Activated CD4-positive, alpha-beta memory T cell treated with anti-CD3 and anti-CD28 coated beads for 36 hours (primary cell): ENCODE measurements at regions of chr18 and their contacts with region 1.

Region 1: DNA sequence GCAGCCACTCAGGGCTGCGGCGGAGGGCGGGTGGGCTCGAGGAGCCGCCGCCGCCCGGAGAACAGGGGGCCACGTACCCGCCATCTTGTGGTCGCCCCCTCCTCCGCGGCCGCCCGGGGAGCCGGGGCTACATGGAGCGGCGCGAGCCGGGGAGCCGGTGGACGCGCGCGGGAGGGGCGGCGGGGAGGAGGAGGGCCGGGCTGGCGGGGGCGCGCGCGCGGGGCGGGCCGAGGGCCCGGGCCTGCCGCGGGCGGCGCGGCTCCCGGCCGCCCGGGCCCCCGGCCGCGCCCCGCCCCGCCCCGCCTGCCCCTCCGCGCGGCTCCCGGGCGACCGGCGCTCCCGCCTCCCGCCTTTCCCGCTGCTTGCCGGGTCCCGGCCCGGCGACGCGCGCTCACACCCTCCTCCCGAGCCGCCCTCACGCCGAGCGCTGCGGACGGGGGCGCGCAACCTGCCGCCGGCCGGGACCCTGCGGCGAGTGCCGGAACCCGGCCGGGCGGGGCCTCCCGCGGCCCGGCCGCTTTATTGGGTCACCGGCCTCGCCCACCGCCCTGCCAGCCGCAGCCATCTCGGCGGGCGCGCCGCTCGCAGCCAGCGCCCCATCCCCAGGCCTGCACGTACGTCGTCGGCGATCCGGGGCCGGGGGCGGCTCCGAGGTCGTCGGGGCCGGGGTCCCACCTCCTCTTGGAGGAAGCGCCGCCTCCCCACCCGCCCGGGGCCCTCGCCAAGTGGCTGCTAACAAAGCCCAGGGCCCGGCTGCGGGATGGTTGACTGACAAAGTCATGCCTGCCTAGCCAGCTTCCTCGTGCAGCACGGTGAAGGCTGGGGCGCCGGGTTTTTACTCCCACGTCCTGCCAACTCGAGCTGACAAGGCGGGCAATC is at the start of gene PPP4R1:
- DNase-seq: peak; percentile 78
- H3K4me3 Mint-ChIP-seq: peak within 1 kb of the TSS; percentile 95
- H3K27ac Mint-ChIP-seq: peak within 1 kb of the TSS; percentile 91
- H3K4me1 Mint-ChIP-seq: peaks cover 35% of the 10 kb centered on the region
- H3K27me3 Mint-ChIP-seq: no peaks in the 10 kb centered on the region
- total RNA-seq, gene PPP4R1: 39.3 to 44.5 TPM

Region 2: DNA sequence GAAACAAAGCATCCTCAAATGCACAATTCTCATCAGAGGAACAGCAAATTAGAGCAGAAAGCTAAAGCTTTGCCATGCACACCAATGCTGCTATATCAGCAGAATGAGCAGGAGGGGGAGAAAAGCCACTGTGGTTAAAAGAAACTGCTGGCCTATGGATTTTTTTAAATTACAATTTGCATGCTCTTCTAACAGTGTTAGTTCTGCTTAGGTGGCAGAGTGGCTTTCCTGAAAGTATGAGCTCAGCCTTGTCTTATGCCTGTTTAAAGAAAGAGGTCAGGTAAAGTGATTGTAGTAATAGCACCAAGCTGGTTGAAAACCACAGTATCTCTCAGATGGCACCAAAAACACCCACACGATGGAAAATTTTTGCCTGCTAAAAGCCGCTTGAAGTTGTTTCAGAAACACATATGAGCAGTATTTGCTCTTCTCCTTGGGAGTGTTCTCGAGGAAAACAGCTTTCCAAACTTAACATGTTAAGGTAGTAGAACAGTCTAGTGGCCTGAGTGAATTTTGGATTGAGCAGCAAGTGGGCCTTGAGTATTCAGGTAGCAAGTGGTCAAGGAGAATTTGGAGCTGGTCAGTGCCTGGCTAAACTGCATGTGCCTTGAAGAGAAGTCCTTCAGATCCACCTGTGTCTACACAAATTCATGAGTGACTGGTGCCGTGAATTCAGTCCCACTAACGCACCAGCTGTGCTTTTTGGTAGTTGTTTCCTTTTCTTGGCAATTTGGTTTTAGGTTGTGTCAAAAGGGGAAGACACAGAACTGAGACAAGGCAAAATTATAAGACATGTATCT is 531.7 kb before region 1 on chr18:
- CTCF ChIA-PET with region 1: no interaction called
- POLR2A ChIA-PET with region 1: no interaction called
- intact Hi-C with region 1: loop called (anchors 10 kb)
- DNase-seq: peak; percentile 82
- H3K4me3 Mint-ChIP-seq: peak overlapping the region; percentile 70
- H3K27ac Mint-ChIP-seq: peak overlapping the region; percentile 100
- H3K4me1 Mint-ChIP-seq: peaks cover 51% of the 10 kb centered on the region
- H3K27me3 Mint-ChIP-seq: no peaks in the 10 kb centered on the region

Region 3: GRCh38 chr18:9474983-9475642 is 139.5 kb before region 1 on chr18 and contains the start of gene RALBP1:
- CTCF ChIA-PET with region 1: no interaction called
- POLR2A ChIA-PET with region 1: no interaction called
- intact Hi-C with region 1: loop called (anchors 2 kb)
- DNase-seq: peak; percentile 99
- H3K4me3 Mint-ChIP-seq: peak within 1 kb of the TSS; percentile 92
- H3K27ac Mint-ChIP-seq: peak within 1 kb of the TSS; percentile 93
- H3K4me1 Mint-ChIP-seq: peaks cover 28% of the 10 kb centered on the region
- H3K27me3 Mint-ChIP-seq: peaks cover 11% of the 10 kb centered on the region
- total RNA-seq, gene RALBP1: 53.1 to 54.7 TPM

Region 4: DNA sequence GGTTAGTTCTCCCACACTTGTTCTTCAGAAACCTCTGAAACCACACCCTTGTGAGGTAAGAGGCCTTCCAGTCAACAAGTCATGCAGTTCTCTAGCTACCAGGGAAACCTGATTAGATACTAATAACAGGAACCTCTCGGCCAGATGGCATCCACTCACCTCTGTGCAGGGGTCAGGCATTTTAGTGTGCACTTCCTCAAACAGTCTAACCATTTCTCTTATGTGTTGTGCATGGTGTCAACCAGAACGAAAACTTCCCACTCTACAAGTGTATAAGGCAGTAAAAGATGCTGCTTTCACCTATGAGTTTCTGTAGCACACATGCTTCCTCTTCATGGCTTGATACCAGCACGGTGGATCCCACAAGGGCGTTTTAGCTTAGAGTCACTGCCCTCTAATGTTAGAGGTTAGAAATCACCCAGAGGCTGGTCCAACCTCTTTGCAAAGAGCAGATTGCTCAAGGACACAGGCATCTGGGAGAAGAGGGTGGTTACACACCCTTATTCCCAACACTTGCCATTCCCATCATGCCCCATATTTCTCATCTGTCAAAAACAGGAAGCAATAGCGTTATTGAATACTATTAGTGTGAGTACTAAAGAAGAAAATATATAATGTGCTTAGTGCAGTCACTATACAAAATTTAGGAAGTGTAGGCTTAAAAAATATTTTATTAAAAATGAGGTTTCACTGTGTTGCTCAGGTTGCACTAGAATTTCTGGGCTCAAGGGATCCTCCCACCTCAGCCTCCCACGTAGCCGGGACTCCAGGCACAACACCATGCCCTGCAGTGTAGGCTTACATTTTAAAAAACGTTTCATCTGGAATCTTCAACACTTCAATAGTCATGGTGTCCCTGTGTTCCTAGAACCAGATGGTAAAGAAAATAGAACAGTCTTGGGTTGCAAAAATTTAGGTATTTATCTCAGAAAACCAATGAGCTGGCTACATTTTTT is 58.9 kb after region 1 on chr18:
- CTCF ChIA-PET with region 1: interaction called, 12 read pairs
- POLR2A ChIA-PET with region 1: no interaction called
- intact Hi-C with region 1: loop called (anchors 1 kb)
- DNase-seq: peak; percentile 54
- H3K4me3 Mint-ChIP-seq: no peak overlapping the region
- H3K27ac Mint-ChIP-seq: peak overlapping the region; percentile 78
- H3K4me1 Mint-ChIP-seq: peaks cover 6% of the 10 kb centered on the region
- H3K27me3 Mint-ChIP-seq: peaks cover 10% of the 10 kb centered on the region

Region 5: DNA sequence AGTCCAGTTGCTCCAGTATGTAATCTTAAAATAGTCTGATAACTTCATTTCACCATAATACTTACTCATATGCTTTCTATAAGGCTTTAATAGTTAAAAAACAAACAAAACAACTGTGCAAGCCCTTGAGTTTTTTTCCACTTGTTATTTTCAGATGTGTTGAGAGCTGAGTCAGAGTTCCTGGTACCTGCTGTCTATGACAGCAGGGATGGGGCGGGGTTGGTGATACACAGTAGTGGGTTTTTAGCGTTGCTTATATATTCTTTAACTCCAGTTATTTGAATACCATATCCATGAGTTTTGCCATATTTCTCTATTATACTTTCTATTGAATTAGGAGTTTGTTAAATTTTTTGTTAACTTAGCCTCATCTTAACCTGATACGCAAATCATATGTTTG is 916.2 kb after region 1 on chr18:
- CTCF ChIA-PET with region 1: no interaction called
- POLR2A ChIA-PET with region 1: no interaction called
- intact Hi-C with region 1: loop called (anchors 2 kb)
- DNase-seq: peak; percentile 66
- H3K4me3 Mint-ChIP-seq: peak overlapping the region; percentile 46
- H3K27ac Mint-ChIP-seq: peak overlapping the region; percentile 96
- H3K4me1 Mint-ChIP-seq: peaks cover 42% of the 10 kb centered on the region
- H3K27me3 Mint-ChIP-seq: no peaks in the 10 kb centered on the region